Natural killer cell (primary cell): ENCODE measurements at regions of chr3 and their contacts with region 1.

Region 1: GRCh38 chr3:13895155-13896105 is 15.6 kb upstream of the WNT7A start:
- DNase-seq: peak; percentile 95 to 96
- ATAC-seq: peak; percentile 98 to 99 (median 98)
- H3K4me3 ChIP-seq: peak overlapping the region; percentile 72
- H3K4me3 Mint-ChIP-seq: peak overlapping the region; percentile 76
- H3K27ac ChIP-seq: peak overlapping the region; percentile 69
- H3K27ac Mint-ChIP-seq: peak overlapping the region; percentile 86 to 92
- H3K4me1 ChIP-seq: peaks cover 30% of the 10 kb centered on the region
- H3K4me1 Mint-ChIP-seq: peaks cover 21 to 26% of the 10 kb centered on the region in 2 donors
- H3K27me3 ChIP-seq: no peaks in the 10 kb centered on the region
- H3K27me3 Mint-ChIP-seq: peaks cover 0 to 6% of the 10 kb centered on the region in 2 donors
- CTCF ChIP-seq: no peak

Region 2: GRCh38 chr3:14178247-14179113 is 283.1 kb after region 1 on chr3 and contains the starts of genes LSM3 and XPC:
- intact Hi-C with region 1: loop called (anchors 2 kb)
- DNase-seq: peak; percentile 98 to 99
- ATAC-seq: peak; percentile 94 to 99 (median 94)
- H3K4me3 ChIP-seq: peak within 1 kb of the TSS; percentile 72
- H3K4me3 Mint-ChIP-seq: peak within 1 kb of the TSS; percentile 100
- H3K27ac ChIP-seq: peak within 1 kb of the TSS; percentile 91
- H3K27ac Mint-ChIP-seq: peak within 1 kb of the TSS; percentile 99 to 100
- H3K4me1 ChIP-seq: peaks cover 30% of the 10 kb centered on the region
- H3K4me1 Mint-ChIP-seq: peaks cover 61 to 66% of the 10 kb centered on the region in 2 donors
- H3K27me3 ChIP-seq: no peaks in the 10 kb centered on the region
- H3K27me3 Mint-ChIP-seq: no peaks in the 10 kb centered on the region
- CTCF ChIP-seq: no peak
- total RNA-seq, gene LSM3: 7.6 to 9.1 (median 8.9) TPM
- total RNA-seq, gene XPC: 45.5 to 62.1 (median 50.0) TPM

Region 3: GRCh38 chr3:14234251-14235002 is 339.0 kb after region 1 on chr3:
- intact Hi-C with region 1: no loop called
- DNase-seq: no peak
- ATAC-seq: no peak
- H3K4me3 ChIP-seq: no peak overlapping the region
- H3K4me3 Mint-ChIP-seq: no peak overlapping the region
- H3K27ac ChIP-seq: no peak overlapping the region
- H3K27ac Mint-ChIP-seq: no peak overlapping the region
- H3K4me1 ChIP-seq: peaks cover 7% of the 10 kb centered on the region
- H3K4me1 Mint-ChIP-seq: peaks cover 8 to 12% of the 10 kb centered on the region in 2 donors
- H3K27me3 ChIP-seq: no peaks in the 10 kb centered on the region
- H3K27me3 Mint-ChIP-seq: peaks cover 34 to 51% of the 10 kb centered on the region in 2 donors
- CTCF ChIP-seq: no peak

Region 4: DNA sequence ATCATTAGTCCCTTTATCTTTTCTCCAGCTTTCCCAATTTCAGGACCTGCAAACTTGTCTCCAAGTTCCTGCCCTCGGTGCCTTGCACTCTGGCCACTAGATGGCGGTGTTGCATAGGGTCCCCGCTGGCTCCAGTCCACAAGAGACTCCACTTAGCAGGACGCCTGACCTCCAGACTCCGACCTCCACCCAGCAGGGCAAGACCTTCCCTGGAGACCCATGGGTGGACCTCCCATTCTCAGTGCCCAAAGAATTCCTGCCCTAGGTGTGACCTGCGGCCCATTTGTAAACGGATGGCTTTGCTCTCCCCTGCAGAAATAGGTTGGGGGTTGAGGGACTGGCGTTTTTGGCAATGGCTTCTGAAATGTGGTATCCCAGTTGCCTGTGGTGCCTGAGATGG is 365.8 kb after region 1 on chr3:
- intact Hi-C with region 1: loop called (anchors 1 kb)
- DNase-seq: peak; percentile 76 to 85
- ATAC-seq: peak; percentile 74 to 89 (median 78)
- H3K4me3 ChIP-seq: no peak overlapping the region
- H3K4me3 Mint-ChIP-seq: no peak overlapping the region
- H3K27ac ChIP-seq: no peak overlapping the region
- H3K27ac Mint-ChIP-seq: no peak overlapping the region
- H3K4me1 ChIP-seq: no peaks in the 10 kb centered on the region
- H3K4me1 Mint-ChIP-seq: no peaks in the 10 kb centered on the region
- H3K27me3 ChIP-seq: no peaks in the 10 kb centered on the region
- H3K27me3 Mint-ChIP-seq: peaks cover 0 to 11% of the 10 kb centered on the region in 2 donors
- CTCF ChIP-seq: peak; percentile 99

Region 5: DNA sequence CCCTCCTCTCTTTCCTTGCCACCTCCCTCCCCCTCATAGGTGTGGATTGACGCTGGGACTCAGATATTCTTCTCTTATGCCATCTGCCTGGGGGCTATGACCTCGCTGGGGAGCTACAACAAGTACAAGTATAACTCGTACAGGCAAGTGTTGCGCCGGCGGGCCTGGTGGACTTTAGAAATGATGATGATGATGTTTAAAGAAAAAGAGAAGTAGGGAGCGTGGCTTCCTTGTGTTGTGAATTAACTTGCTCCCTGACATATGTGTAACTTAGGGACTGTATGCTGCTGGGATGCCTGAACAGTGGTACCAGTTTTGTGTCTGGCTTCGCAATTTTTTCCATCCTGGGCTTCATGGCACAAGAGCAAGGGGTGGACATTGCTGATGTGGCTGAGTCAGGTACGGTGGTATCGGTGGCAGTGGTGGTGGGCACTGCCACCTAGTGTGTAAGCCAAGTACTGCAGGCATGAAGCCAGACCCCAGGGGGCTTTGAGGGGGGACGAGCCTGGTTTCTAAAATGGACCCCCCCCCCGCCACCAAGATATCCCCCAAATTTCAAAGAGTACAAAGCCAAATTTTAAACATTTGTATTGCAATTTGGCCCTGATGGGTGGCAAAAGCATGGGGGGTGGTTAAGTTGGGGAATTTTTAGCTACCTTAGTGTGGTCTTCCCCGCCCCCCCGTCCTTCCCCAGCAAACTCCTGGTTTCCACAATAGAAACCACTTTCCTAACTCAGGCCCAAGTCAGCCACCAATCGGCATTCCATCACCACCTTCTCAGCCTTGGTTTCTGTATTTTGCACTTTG is 572.6 kb after region 1 on chr3:
- intact Hi-C with region 1: loop called (anchors 2 kb)
- DNase-seq: peak; percentile 49 to 74
- ATAC-seq: peak; percentile 71 to 91 (median 87)
- H3K4me3 ChIP-seq: no peak overlapping the region
- H3K4me3 Mint-ChIP-seq: no peak overlapping the region
- H3K27ac ChIP-seq: no peak overlapping the region
- H3K27ac Mint-ChIP-seq: no peak overlapping the region
- H3K4me1 ChIP-seq: no peaks in the 10 kb centered on the region
- H3K4me1 Mint-ChIP-seq: no peaks in the 10 kb centered on the region
- H3K27me3 ChIP-seq: no peaks in the 10 kb centered on the region
- H3K27me3 Mint-ChIP-seq: no peaks in the 10 kb centered on the region
- CTCF ChIP-seq: peak; percentile 84